Sigmoid colon (tissue), 7 donors: ENCODE measurements at regions of chr11 and their contacts with region 1.

Region 1: GRCh38 chr11:121249039-121249663 is 43.4 kb upstream of the SC5D start:
- DNase-seq: no peak
- H3K4me3 ChIP-seq: no peak overlapping the region
- H3K27ac ChIP-seq: no peak overlapping the region
- H3K4me1 ChIP-seq: no peaks in the 10 kb centered on the region
- H3K27me3 ChIP-seq: no peaks in the 10 kb centered on the region
- CTCF ChIP-seq: peak; percentile 50 to 74 (median 71)
- EP300 ChIP-seq: no peak
- POLR2A ChIP-seq: no peak

Region 2: GRCh38 chr11:121207485-121208115 is 41.6 kb before region 1 on chr11:
- intact Hi-C with region 1: no loop called
- DNase-seq: no peak
- H3K4me3 ChIP-seq: no peak overlapping the region
- H3K27ac ChIP-seq: no peak overlapping the region
- H3K4me1 ChIP-seq: peaks cover 0 to 18% (median 11%) of the 10 kb centered on the region in 4 donors
- H3K27me3 ChIP-seq: no peaks in the 10 kb centered on the region
- CTCF ChIP-seq: no peak
- EP300 ChIP-seq: no peak
- POLR2A ChIP-seq: no peak

Region 3: DNA sequence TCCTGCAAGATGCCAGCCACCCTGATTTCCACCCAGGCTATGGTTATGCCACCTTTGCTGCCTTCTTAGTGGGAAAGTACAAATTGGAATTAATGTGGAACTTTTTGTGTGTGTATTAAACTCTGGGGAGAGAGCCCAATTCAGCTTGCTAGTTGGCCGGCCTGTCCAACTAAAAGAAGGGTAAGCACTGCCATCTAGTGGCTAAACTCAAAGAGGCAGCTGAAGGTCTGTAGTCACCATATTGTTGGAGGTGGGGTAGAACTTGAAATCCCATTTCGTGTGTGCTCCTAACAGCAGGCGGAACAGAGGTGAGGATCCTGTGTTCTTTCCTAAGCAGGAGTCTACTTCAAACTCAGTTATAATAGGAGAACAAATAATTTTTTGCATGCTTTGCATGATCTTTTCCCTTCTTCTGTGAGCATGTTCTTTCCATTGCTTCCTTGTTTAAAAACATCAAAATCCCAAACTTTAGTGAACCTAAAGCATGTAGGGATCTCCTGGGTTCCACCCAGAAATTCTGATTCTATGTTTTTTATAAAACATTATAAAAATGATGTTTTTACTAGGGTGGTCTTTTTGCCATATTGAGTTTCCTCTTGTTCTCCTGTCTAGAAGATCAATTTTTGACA is 342.4 kb after region 1 on chr11:
- intact Hi-C with region 1: loop called (anchors 1 kb)
- DNase-seq: peak; percentile 74
- H3K4me3 ChIP-seq: no peak overlapping the region
- H3K27ac ChIP-seq: peak overlapping the region; percentile 1 to 83 (median 76)
- H3K4me1 ChIP-seq: peaks cover 0 to 32% (median 22%) of the 10 kb centered on the region in 4 donors
- H3K27me3 ChIP-seq: no peaks in the 10 kb centered on the region
- CTCF ChIP-seq: peak; percentile 64 to 90 (median 80)
- EP300 ChIP-seq: no peak
- POLR2A ChIP-seq: no peak

Region 4: GRCh38 chr11:121655537-121656327 is 406.6 kb after region 1 on chr11:
- intact Hi-C with region 1: no loop called
- DNase-seq: peak; percentile 95
- H3K4me3 ChIP-seq: peak overlapping the region; percentile 27 to 50 (median 40)
- H3K27ac ChIP-seq: peak overlapping the region; percentile 83 to 95 (median 89)
- H3K4me1 ChIP-seq: peaks cover 0 to 31% (median 21%) of the 10 kb centered on the region in 4 donors
- H3K27me3 ChIP-seq: no peaks in the 10 kb centered on the region
- CTCF ChIP-seq: peak; percentile 76 to 84 (median 80)
- EP300 ChIP-seq: peak in 2 of 4 donors; percentile 15 to 16
- POLR2A ChIP-seq: no peak